ENCODE measurements at regions of chr16 and their contacts with region 1.

Region 1: DNA sequence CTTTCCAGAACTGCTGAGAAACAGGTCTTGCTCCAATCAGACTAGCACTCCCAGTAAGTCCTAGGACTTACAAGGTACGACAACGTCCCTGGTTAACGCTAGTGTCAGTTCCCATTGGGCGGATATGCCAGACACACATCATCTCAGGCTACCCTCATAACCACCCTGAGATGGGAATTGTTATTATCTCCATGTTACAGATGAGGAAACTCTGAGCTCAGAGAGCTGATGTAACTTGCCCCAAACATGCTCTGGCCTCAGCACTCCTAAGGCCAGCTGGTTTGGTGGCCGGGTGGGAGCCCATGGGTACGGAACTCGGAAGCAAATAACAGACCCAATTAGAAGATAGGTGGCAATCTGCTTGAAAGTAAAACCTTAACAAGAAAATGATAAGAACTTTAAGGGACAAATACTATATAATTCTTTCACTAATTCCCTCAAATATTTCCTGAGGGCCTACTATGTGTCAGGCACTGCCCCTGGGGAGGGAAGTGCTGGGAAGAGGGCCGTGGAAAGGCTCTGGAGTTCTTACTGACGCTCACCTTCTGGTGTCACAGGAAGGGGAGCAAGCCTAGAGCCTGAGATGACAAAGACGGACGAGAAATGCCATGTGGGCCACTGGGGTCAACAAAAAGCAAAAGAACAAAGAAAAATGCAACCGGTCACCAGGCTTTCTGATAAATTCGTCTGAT is 6.9 kb downstream of the CREBBP start:
- DNase-seq: no peak
- ATAC-seq: no peak
- H3K4me3 ChIP-seq: no peak overlapping the region
- H3K27ac ChIP-seq: no peak overlapping the region
- H3K4me1 ChIP-seq: peaks cover 36% of the 10 kb centered on the region
- H3K27me3 ChIP-seq: no peaks in the 10 kb centered on the region
- CTCF ChIP-seq: no peak

Region 2: DNA sequence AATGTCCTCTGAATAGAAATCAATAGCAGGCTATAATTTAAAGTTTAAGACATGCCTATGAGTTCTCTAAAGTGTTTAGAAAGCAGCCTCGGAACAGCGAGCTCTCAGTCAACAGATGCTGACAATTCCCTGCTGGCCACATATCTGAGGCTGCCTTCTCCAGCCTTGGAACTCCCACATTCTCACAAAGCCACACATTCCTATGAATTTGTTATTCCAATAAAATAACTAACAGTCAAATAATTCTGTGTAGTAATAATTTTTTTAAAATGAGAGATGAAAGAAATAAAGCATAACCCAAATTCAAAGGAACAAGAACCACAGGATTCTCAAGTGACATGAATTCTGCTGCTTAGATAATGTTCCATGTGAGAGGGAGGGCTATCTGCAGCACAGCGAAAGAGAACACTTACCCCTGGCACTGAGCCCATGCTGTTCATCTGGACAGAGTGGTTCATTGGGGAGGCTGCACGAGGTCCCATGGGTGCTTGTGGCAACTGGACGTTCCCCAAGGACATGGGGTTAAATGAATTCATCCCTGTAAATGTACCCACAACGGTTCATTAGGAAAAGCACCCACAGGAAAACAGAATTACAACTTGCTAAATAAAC is 99.4 kb before region 1 on chr16:
- CTCF ChIA-PET with region 1: no interaction called
- POLR2A ChIA-PET with region 1: no interaction called
- intact Hi-C with region 1: loop called (anchors 5 kb)
- DNase-seq: no peak
- ATAC-seq: no peak
- H3K4me3 ChIP-seq: no peak overlapping the region
- H3K27ac ChIP-seq: no peak overlapping the region
- H3K4me1 ChIP-seq: peaks cover 30% of the 10 kb centered on the region
- H3K27me3 ChIP-seq: no peaks in the 10 kb centered on the region
- CTCF ChIP-seq: no peak

Region 3: GRCh38 chr16:4021073-4021779 is 147.6 kb after region 1 on chr16:
- CTCF ChIA-PET with region 1: no interaction called
- POLR2A ChIA-PET with region 1: interaction called, 10 read pairs
- intact Hi-C with region 1: no loop called
- DNase-seq: peak; percentile 69
- ATAC-seq: peak; percentile 99
- H3K4me3 ChIP-seq: no peak overlapping the region
- H3K27ac ChIP-seq: no peak overlapping the region
- H3K4me1 ChIP-seq: 0 out of 2 replicates have a peak, but pooled peaks cover 11% of the 10 kb centered on the region
- H3K27me3 ChIP-seq: no peaks in the 10 kb centered on the region
- CTCF ChIP-seq: no peak